ENCODE measurements at regions of chr7 and their contacts with region 1.

Region 1: DNA sequence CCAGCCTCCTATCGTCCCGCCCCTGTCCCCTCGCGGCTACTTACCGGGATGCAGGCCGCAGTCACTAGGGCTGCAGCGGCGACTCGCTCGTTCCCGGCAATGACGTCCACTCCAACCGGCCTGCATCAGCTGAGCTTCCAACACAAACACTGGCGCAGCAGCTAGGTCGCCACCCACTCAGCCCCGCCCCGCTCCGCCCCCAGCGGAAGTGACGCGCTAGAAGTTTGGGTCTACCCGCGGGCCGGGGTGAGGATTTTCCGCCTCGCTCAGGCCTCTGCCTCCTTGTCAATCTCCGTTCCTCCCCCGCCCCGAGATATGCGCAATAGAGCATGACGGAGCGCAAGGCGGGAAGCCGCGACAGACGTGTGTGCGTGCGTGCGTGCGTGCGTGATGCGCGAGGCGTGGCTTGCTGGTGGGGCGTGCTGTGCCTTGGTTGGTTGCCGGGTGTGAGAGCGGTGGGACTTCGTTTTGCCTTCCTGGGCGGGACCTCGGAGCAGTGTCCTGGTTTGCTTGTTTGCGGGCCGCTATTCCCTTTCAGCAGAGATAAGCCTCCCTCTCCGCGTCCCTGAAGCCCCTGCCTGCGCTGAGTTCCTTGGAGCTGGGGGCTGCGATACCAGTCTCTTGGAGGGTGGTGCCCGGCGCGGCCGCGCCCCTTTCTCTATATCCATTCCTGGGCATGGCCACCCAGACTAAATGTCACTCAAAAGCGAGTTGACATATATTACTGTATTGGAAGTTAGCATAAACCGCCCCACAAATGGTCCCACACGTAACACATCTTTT is at the start of gene PNPLA8:
- DNase-seq: peak; percentile 100
- H3K4me3 ChIP-seq: peak within 1 kb of the TSS; percentile 29 to 45 (median 43)
- H3K27ac ChIP-seq: peak within 1 kb of the TSS; percentile 85 to 99 (median 98)
- H3K4me1 ChIP-seq: peaks cover 17 to 18% of the 10 kb centered on the region in 2 donors
- H3K27me3 ChIP-seq: no peaks in the 10 kb centered on the region
- CTCF ChIP-seq: peak in 1 of 6 experiments; percentile 13
- POLR2A ChIP-seq: peak; percentile 66 to 93
- total RNA-seq, gene PNPLA8: 42.9 to 62.1 (median 47.2) TPM

Region 2: DNA sequence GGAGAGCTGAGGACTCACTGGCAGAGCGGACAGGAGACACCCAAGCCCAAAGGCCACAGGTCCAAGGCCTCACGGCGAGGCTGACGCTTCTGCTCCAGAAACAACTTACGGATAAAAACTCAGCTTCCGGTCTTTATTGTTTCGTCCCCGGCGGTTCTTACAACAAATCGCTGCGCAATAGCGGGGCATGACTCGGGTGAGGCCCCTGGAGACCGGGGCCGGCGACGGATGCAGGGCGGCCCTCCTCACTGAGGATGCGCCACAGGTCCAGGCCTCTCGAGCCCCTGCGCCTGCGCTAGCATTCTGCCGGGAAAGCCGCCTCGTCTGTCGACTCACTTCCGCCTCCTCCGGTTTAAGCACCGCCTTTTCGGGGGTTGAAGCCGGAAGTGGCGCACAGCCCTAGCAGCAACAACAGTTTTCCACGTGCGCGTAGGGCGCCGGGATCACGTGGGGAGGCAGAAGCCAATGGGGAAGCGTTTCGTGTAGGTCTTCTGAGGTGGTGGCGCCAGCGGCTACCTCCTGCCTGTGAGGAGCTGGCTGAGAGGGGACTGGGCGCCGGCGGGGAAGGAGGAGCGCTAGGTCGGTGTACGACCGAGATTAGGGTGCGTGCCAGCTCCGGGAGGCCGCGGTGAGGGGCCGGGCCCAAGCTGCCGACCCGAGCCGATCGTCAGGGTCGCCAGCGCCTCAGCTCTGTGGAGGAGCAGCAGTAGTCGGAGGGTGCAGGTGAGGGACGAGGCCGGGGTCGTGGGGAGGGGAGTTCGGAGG is 43.4 kb after region 1 on chr7 and contains the starts of genes DNAJB9 and THAP5:
- intact Hi-C with region 1: loop called (anchors 5 kb)
- DNase-seq: peak; percentile 99 to 100
- H3K4me3 ChIP-seq: peak within 1 kb of the TSS; percentile 73 to 94 (median 80)
- H3K27ac ChIP-seq: peak within 1 kb of the TSS; percentile 92 to 97 (median 96)
- H3K4me1 ChIP-seq: peaks cover 18 to 27% of the 10 kb centered on the region in 2 donors
- H3K27me3 ChIP-seq: no peaks in the 10 kb centered on the region
- CTCF ChIP-seq: peak in 1 of 6 experiments; percentile 5
- POLR2A ChIP-seq: peak; percentile 92 to 100
- total RNA-seq, gene DNAJB9: 68.4 to 105 (median 92.0) TPM
- total RNA-seq, gene THAP5: 32.2 to 48.3 (median 38.9) TPM

Region 3: GRCh38 chr7:109059089-109059488 is 532.9 kb after region 1 on chr7:
- intact Hi-C with region 1: no loop called
- DNase-seq: no peak
- H3K4me3 ChIP-seq: no peak overlapping the region
- H3K27ac ChIP-seq: no peak overlapping the region
- H3K4me1 ChIP-seq: no peaks in the 10 kb centered on the region
- H3K27me3 ChIP-seq: no peaks in the 10 kb centered on the region
- CTCF ChIP-seq: no peak
- POLR2A ChIP-seq: no peak